AG04449 (cell line): ENCODE measurements at regions of chr10 and their contacts with region 1.

Region 1: GRCh38 chr10:88820748-88821389 is 18.3 kb downstream of the LIPM start:
- DNase-seq: peak; percentile 44
- H3K4me3 ChIP-seq: no peak overlapping the region
- CTCF ChIP-seq: no peak

Region 2: GRCh38 chr10:88565072-88565471 is 255.8 kb before region 1 on chr10:
- CTCF ChIA-PET with region 1: interaction called, 14 read pairs
- POLR2A ChIA-PET with region 1: no interaction called
- DNase-seq: no peak
- H3K4me3 ChIP-seq: no peak overlapping the region
- CTCF ChIP-seq: peak; percentile 14